ENCODE measurements at regions of chr15 and their contacts with region 1.

Region 1: GRCh38 chr15:97995881-97996603 is 35.5 kb downstream of the ARRDC4 start:
- DNase-seq: peak in 1 of 2 experiments; percentile 49
- H3K4me3 ChIP-seq: no peak overlapping the region
- H3K27ac ChIP-seq: no peak overlapping the region
- H3K4me1 ChIP-seq: no peaks in the 10 kb centered on the region
- H3K27me3 ChIP-seq: no peaks in the 10 kb centered on the region
- CTCF ChIP-seq: peak; percentile 42 to 63 (median 53)
- EP300 ChIP-seq: no peak
- POLR2A ChIP-seq: no peak
- RAD21 ChIP-seq: peak; percentile 44 to 59

Region 2: DNA sequence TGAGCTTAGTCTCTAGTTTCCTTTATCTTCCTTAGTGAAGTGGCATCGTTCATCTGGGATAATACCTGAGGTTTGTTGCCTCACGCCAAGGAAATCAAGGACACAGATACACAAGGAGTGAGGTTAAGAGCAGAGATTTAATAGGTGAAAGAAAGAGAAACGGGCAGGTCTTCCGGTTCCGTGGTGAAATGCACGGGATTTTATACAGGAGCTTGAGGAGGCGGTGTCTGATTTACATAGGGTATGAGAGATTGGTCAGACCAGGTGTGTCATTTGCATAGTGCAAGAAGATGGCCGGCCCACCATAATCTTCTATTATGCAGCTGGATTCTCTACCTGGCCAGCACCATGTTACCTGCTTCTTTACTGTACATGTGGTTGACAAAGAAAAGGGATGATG is 18.3 kb before region 1 on chr15:
- CTCF ChIA-PET with region 1: interaction called, 14 read pairs
- POLR2A ChIA-PET with region 1: no interaction called
- DNase-seq: no peak
- H3K4me3 ChIP-seq: no peak overlapping the region
- H3K27ac ChIP-seq: no peak overlapping the region
- H3K4me1 ChIP-seq: no peaks in the 10 kb centered on the region
- H3K27me3 ChIP-seq: no peaks in the 10 kb centered on the region
- CTCF ChIP-seq: no peak
- EP300 ChIP-seq: no peak
- POLR2A ChIP-seq: no peak
- RAD21 ChIP-seq: no peak

Region 3: GRCh38 chr15:98043160-98044014 is 47.3 kb after region 1 on chr15:
- CTCF ChIA-PET with region 1: no interaction called
- POLR2A ChIA-PET with region 1: no interaction called
- DNase-seq: no peak
- H3K4me3 ChIP-seq: no peak overlapping the region
- H3K27ac ChIP-seq: no peak overlapping the region
- H3K4me1 ChIP-seq: no peaks in the 10 kb centered on the region
- H3K27me3 ChIP-seq: no peaks in the 10 kb centered on the region
- CTCF ChIP-seq: no peak
- EP300 ChIP-seq: no peak
- POLR2A ChIP-seq: no peak
- RAD21 ChIP-seq: peak in 1 of 2 experiments; percentile 12; a peak in 1 of 4 replicates

Region 4: DNA sequence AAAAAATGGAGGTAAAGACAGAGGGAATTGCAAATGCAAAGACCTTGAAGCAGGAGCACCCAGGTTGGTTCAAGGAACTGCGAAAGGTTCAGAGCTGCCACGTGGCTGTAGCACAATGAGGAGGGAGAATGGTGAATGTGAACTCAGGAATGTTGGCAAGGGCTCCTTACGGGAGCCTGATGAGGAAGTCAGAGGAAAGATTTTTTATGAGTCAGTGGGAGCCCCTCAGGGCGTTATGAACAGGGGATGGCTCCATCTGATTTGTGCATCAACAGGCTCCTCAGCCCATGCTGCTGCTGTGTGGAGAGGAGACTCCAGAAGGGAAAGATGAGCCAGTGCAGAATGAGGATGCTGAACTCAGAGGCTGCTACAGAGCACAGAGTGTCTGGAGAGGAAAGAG is 158.8 kb after region 1 on chr15:
- CTCF ChIA-PET with region 1: no interaction called
- POLR2A ChIA-PET with region 1: no interaction called
- DNase-seq: no peak
- H3K4me3 ChIP-seq: no peak overlapping the region
- H3K27ac ChIP-seq: no peak overlapping the region
- H3K4me1 ChIP-seq: peaks cover 0 to 3% (median 0%) of the 10 kb centered on the region in 4 experiments; a peak in 1 of 7 replicates
- H3K27me3 ChIP-seq: no peaks in the 10 kb centered on the region; a peak in 1 of 7 replicates
- CTCF ChIP-seq: no peak
- EP300 ChIP-seq: no peak
- POLR2A ChIP-seq: no peak
- RAD21 ChIP-seq: no peak

Region 5: DNA sequence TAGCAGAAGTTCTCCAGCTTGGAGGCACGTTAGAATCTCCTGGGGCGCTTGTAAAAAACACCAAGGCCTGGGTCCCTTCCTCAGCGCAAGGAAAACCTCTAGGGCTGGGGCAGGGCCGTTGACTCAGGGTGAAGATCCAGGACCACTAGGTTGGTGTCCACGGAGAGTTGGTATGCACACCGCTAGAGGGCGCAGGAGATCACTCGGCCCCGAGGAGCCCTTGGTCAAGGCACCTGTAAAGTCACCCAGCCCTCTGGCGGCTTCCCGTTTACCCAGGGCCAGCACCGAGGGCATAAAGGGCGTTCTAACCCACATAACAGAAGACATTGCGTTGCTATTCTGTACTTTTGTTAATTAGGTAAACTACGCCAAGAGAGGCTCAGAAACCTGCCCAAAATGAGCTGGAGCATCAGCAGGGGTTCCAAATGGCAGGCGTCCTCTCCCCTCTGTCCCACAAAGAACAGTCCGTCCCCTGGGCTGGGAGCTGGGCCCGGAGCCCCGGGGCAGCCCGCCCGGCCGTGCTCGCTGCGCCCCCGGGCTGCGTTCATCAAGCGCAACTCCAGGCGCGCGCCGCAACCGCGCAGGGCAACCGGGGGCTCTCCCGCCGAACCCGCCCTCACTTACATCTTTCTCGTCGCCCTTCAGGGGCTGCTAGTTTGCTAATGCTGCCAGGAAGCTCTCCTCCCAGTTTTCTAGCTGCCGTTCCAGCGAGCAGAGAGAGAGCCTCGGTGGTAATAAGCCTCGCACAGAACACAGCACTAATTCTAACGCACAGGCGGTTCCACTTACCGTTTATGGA is 296.6 kb after region 1 on chr15:
- CTCF ChIA-PET with region 1: no interaction called
- POLR2A ChIA-PET with region 1: no interaction called
- DNase-seq: peak; percentile 54 to 93
- H3K4me3 ChIP-seq: peak overlapping the region; percentile 32 to 70 (median 34)
- H3K27ac ChIP-seq: no peak overlapping the region
- H3K4me1 ChIP-seq: no peaks in the 10 kb centered on the region; a peak in 2 of 7 replicates
- H3K27me3 ChIP-seq: peaks cover 0 to 13% (median 9%) of the 10 kb centered on the region in 4 experiments; a peak in 6 of 7 replicates
- CTCF ChIP-seq: peak; percentile 94 to 96 (median 94)
- EP300 ChIP-seq: no peak
- POLR2A ChIP-seq: no peak
- RAD21 ChIP-seq: peak; percentile 53 to 66

Measured in H1 (cell line).